ENCODE measurements at regions of chr5 and their contacts with region 1.

Region 1: DNA sequence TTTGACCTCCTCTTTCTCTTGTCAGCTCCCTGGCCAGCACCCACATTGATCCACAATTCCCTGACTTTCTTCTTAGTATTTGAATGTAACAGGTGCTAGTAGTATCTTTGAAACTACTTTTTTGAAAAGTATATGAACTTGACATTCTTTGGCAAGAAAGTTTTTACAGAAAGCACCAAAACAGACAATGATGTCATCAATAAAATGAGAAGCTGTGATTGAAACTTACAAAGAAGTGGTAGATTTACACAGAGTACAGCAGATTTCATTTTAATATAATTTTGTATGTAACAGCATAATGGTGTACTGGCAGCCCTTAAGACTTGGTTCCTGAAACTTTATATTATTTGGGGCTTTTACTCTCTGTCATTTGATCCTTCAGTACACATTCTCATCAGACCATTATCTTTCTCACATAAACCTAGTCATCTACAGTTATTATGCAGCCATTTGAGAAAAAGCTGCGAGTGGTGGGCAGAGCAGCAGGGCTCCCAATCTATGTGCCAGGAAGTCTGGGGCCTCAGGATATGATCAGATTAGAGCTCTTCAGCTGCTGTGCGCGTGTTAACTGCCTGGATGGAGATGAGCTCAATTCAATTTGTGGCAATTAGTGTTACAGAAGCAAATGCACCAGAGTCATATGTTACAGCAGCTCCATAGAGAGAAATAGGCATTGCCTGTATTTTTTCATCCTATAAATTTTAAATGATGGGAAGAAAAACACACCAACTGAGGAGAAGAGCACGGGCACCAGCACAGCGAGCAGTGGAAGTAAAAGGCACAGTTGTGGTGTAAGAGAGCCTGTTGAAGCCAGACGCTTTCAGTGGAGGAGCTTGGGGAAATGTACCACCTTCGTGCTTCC is 126.1 kb downstream of the STARD4 start:
- DNase-seq: peak; percentile 60
- H3K4me3 ChIP-seq: no peak overlapping the region
- H3K27ac ChIP-seq: peak overlapping the region; percentile 40 to 100
- H3K4me1 ChIP-seq: peaks cover 18 to 49% of the 10 kb centered on the region in 2 experiments; a peak in 3 of 4 replicates
- H3K27me3 ChIP-seq: no peaks in the 10 kb centered on the region
- CTCF ChIP-seq: no peak
- EP300 ChIP-seq: peak in 1 of 2 experiments; percentile 99; a peak in 2 of 4 replicates
- RAD21 ChIP-seq: peak; percentile 39

Region 2: GRCh38 chr5:111223889-111224563 is 162.2 kb before region 1 on chr5 and contains the start of gene CAMK4:
- CTCF ChIA-PET with region 1: interaction called, 6 read pairs
- POLR2A ChIA-PET with region 1: interaction called, 22 read pairs
- DNase-seq: peak; percentile 97
- H3K4me3 ChIP-seq: peak within 1 kb of the TSS; percentile 84 to 86
- H3K27ac ChIP-seq: peak within 1 kb of the TSS; percentile 9 to 88; a peak in 3 of 4 replicates
- H3K4me1 ChIP-seq: peaks cover 0 to 25% of the 10 kb centered on the region in 2 experiments; a peak in 2 of 4 replicates
- H3K27me3 ChIP-seq: no peaks in the 10 kb centered on the region
- CTCF ChIP-seq: peak; percentile 27
- EP300 ChIP-seq: 0 out of 4 replicates have a peak, but pooled peaks of 1 of the 2 experiments have one; percentile 29
- RAD21 ChIP-seq: peak; percentile 55
- polyA plus RNA-seq, gene CAMK4: 4.1 and 4.6 TPM in 2 replicates

Region 3: DNA sequence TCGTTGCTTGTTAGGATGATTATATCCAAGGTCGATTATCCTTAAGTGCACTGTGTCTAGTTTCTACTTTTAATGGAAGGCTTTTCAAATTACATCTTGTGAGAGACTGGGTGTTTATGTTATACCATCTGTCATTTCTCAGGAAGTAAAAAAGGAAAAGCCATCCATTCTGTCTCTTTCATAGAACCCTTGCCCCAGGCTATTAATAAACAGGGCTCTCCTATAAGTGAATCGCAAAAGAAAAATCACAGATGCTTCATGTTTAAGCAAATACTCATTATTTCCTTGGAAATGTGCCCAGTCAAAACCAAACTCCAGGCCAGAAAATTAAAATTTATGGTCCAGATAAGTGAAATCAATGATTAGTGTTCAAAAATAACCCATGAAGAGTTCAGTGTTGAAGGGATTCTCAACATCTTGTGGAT is 68.0 kb after region 1 on chr5:
- CTCF ChIA-PET with region 1: interaction called, 10 read pairs
- POLR2A ChIA-PET with region 1: interaction called, 9 read pairs
- DNase-seq: peak; percentile 67
- H3K4me3 ChIP-seq: peak overlapping the region in 1 of 2 experiments; percentile 30; a peak in 1 of 4 replicates
- H3K27ac ChIP-seq: peak overlapping the region; percentile 96 to 99
- H3K4me1 ChIP-seq: peaks cover 13 to 29% of the 10 kb centered on the region in 2 experiments; a peak in 3 of 4 replicates
- H3K27me3 ChIP-seq: no peaks in the 10 kb centered on the region
- CTCF ChIP-seq: no peak
- EP300 ChIP-seq: peak; percentile 70 to 98
- RAD21 ChIP-seq: peak; percentile 28; the same call in 1 of the 2 replicates